PC-9 (cell line): ENCODE measurements at regions of chr19 and their contacts with region 1.

Region 1: GRCh38 chr19:12551060-12551832 is at the start of gene ZNF564:
- DNase-seq: peak; percentile 93 to 98
- H3K4me3 ChIP-seq: peak within 1 kb of the TSS; percentile 67
- H3K27ac ChIP-seq: peak within 1 kb of the TSS; percentile 59
- H3K4me1 ChIP-seq: peaks cover 21% of the 10 kb centered on the region
- H3K27me3 ChIP-seq: no peaks in the 10 kb centered on the region
- CTCF ChIP-seq: no peak
- total RNA-seq, gene ZNF564: 8.3 and 14.8 TPM in 2 replicates

Region 2: DNA sequence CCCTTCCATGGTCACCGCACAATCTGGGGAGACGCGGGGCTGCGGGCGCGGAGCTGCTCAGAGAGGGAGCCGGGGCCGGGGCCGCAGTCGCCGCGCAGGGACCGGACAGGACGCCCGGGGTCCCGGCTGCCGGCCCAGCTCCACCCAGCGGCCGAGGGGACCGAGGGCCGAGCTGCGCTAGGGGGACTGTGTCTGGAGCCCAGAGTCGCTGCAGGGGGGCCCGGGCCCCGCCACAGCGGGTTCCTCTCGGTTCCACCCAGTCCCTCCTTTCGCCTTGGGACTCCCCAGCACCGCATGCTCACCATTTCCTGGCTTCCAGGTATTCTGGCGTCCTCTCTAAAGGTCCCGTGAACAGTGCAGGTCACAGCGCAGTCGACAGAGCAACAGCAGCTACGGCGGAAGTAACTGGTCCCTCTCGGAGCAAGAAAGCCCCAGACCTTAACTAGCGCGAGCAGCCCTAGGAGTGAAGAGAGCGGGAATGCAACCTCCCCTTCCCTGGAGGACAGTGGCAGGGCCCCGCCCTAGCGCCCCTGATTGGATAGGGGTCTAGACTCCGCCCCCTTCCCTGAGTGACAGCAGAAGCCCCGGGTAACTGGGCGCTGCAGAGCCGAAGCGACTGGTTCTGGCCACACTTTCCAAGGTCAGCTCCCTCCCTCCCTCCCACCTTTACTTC is 498.6 kb before region 1 on chr19 and contains the start of gene ZNF878:
- CTCF ChIA-PET with region 1: no interaction called
- POLR2A ChIA-PET with region 1: no interaction called
- intact Hi-C with region 1: loop called (anchors 10 kb)
- DNase-seq: peak in 1 of 2 experiments; percentile 86
- H3K4me3 ChIP-seq: peak within 1 kb of the TSS; percentile 43
- H3K27ac ChIP-seq: no peak within 1 kb of the TSS
- H3K4me1 ChIP-seq: no peaks in the 10 kb centered on the region
- H3K27me3 ChIP-seq: no peaks in the 10 kb centered on the region
- CTCF ChIP-seq: no peak
- total RNA-seq, gene ZNF878: 0.33 and 0.46 TPM in 2 replicates

Region 3: GRCh38 chr19:12162882-12163806 is 388.1 kb before region 1 on chr19 and contains the start of gene ZNF136:
- CTCF ChIA-PET with region 1: no interaction called
- POLR2A ChIA-PET with region 1: no interaction called
- intact Hi-C with region 1: no loop called
- DNase-seq: peak; percentile 89 to 90
- H3K4me3 ChIP-seq: peak within 1 kb of the TSS; percentile 82
- H3K27ac ChIP-seq: peak within 1 kb of the TSS; percentile 89
- H3K4me1 ChIP-seq: peaks cover 12% of the 10 kb centered on the region
- H3K27me3 ChIP-seq: no peaks in the 10 kb centered on the region
- CTCF ChIP-seq: no peak
- total RNA-seq, gene ZNF136: 5.3 and 6.2 TPM in 2 replicates

Region 4: DNA sequence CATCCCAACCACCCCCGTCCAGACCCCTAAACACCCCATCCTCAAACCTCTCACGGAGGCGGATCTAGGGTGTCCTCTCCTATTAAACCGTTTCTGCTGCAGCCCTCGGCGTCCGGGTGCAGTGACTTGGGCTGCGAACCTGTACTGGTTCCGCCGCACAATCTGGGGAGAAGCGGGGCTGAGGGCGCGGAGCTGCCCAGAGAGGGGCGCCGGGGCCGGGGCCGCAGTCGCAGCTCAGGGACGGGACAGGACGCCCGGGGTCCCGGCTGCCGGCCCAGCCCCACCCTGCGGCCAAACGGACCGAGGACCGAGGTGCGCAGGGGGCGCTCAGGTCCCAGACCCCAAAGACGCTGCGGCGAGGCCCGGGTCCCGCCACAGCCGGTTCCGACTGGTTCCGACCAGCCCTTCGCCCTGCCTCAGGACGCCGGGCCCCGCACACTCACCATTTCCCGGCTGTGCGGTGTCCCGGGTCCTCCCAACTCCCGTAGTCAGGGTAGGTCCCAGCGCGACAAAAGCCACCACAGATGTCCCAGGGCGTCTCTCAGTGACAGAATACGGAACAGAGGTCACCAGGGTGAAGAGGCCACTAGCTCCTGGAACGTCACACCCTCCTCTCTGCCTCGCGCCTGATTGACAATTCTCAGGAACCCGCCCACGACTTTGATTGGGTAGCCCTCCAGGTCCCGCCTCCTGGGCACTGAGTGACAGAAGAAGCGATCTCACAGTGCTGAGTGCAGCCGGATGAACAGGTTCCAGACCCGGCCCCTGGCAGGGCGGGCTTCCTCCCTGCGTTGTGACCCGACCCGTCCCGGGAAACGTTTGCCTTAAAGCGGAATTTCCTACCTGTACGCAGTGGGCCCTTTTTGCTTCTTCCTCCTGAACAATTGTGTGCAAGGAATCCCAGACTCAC is 256.7 kb before region 1 on chr19 and contains the start of gene ZNF44:
- CTCF ChIA-PET with region 1: no interaction called
- POLR2A ChIA-PET with region 1: no interaction called
- intact Hi-C with region 1: loop called (anchors 2 kb)
- DNase-seq: peak; percentile 97 to 98
- H3K4me3 ChIP-seq: peak within 1 kb of the TSS; percentile 67
- H3K27ac ChIP-seq: no peak within 1 kb of the TSS
- H3K4me1 ChIP-seq: peaks cover under 1% of the 10 kb centered on the region; the same call in 1 of the 2 replicates
- H3K27me3 ChIP-seq: no peaks in the 10 kb centered on the region
- CTCF ChIP-seq: no peak
- total RNA-seq, gene ZNF44: 4.0 and 5.0 TPM in 2 replicates

Region 5: DNA sequence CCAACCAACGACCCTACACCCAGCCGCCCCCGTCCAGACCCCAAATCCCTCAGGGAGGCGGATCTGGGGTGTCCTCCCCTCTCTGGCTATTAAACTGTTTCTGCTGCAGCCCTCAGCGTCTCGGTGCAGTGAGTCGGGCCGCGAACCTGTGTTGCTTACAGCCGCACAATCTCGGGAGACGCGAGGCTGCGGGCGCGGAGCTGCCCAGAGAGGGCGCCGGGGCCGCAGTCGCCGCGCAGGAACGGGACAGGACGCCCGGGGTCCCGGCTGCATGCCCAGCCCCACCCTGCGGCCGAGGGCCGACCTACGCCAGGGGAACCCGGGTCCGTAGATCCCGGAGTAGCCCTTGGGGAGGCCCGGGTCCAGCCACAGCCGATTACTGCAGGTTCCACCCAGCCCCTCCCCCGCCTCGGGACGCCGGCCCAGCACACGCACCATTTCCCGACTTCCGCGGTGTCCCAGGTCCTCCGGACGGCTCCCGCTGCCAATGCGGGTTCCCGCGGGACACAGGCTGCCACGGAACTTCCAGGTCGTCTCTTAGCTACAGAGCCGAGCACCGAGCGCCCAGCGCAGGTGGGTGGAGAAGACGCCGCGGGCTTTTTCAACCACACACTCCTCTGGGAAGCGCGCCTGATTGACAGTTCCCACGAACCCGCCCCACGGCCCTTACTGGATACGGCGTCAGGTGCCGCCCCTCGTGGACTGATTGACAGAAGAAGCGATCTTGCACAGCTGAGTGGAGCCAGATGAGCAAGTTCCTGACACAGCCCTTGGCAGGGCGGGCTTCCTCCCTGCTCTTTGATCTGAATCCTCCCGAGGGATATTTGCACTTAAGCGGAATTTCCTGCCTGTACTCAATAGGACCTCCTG is 150.4 kb before region 1 on chr19 and contains the start of gene ZNF799:
- CTCF ChIA-PET with region 1: no interaction called
- POLR2A ChIA-PET with region 1: no interaction called
- intact Hi-C with region 1: loop called (anchors 5 kb)
- DNase-seq: peak; percentile 96 to 97
- H3K4me3 ChIP-seq: peak within 1 kb of the TSS; percentile 93
- H3K27ac ChIP-seq: peak within 1 kb of the TSS; percentile 7; the same call in 1 of the 2 replicates
- H3K4me1 ChIP-seq: peaks cover 11% of the 10 kb centered on the region; the same call in 1 of the 2 replicates
- H3K27me3 ChIP-seq: no peaks in the 10 kb centered on the region
- CTCF ChIP-seq: no peak; the same call in 1 of the 2 replicates
- total RNA-seq, gene ZNF799: 2.5 and 2.9 TPM in 2 replicates

Region 6: GRCh38 chr19:12440541-12441316 is 110.5 kb before region 1 on chr19 and contains the start of gene ZNF443:
- CTCF ChIA-PET with region 1: no interaction called
- POLR2A ChIA-PET with region 1: no interaction called
- intact Hi-C with region 1: loop called (anchors 2 kb)
- DNase-seq: peak; percentile 98 to 99
- H3K4me3 ChIP-seq: peak within 1 kb of the TSS; percentile 89
- H3K27ac ChIP-seq: no peak within 1 kb of the TSS
- H3K4me1 ChIP-seq: peaks cover 11% of the 10 kb centered on the region; the same call in 1 of the 2 replicates
- H3K27me3 ChIP-seq: no peaks in the 10 kb centered on the region
- CTCF ChIP-seq: no peak; the same call in 1 of the 2 replicates
- total RNA-seq, gene ZNF443: 3.3 and 3.5 TPM in 2 replicates

Region 7: GRCh38 chr19:12495002-12495802 is 56.0 kb before region 1 on chr19:
- CTCF ChIA-PET with region 1: no interaction called
- POLR2A ChIA-PET with region 1: no interaction called
- intact Hi-C with region 1: loop called (anchors 2 kb)
- DNase-seq: peak; percentile 84 to 93
- H3K4me3 ChIP-seq: peak overlapping the region; percentile 61
- H3K27ac ChIP-seq: no peak overlapping the region
- H3K4me1 ChIP-seq: 0 out of 2 replicates have a peak, but pooled peaks cover 6% of the 10 kb centered on the region
- H3K27me3 ChIP-seq: no peaks in the 10 kb centered on the region
- CTCF ChIP-seq: no peak; the same call in 1 of the 2 replicates

Region 8: DNA sequence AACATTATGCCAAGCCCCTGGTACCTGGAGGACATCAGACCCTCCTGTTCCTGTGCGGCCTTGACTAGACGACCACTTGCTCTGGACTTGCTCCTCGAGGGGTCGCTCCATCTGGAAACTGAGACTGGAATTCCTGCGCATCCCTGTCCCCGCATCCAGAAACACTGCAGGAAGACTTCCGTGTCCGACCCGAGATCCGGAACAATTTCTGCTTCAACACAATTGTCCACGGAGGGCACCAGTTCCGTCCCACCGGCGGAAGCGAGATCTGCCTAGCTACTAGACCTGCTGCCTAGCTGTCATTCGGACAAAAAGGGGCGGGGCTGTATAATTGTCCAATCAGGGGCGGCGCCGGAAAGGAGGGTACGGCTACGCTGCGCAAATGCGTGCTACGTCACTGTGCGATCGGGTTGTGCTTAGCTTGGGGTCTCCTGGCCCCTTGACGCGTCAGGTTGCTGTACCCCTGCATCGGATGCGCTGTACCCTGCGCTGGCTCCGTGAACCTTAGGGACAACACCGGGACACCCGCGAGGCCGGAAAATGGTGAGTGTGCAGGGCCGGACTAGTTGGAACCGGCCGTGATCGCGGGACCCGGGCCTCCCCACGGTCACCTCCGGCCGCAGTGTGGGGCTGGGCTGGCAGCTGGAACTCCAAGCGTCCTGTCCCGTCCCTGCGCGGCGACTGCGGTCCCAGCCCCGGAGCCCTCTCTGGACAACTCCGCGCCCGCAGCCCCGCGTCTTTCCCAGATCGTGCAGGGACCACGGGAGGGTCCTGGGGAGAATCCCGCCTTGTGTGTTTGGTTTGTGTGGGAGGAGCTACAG is 59.5 kb after region 1 on chr19 and contains the starts of genes ZNF490 and ZNF791:
- CTCF ChIA-PET with region 1: interaction called, 3 read pairs
- POLR2A ChIA-PET with region 1: interaction called, 4 read pairs
- intact Hi-C with region 1: loop called (anchors 2 kb)
- DNase-seq: peak; percentile 94 to 95
- H3K4me3 ChIP-seq: peak within 1 kb of the TSS; percentile 78
- H3K27ac ChIP-seq: peak within 1 kb of the TSS; percentile 55
- H3K4me1 ChIP-seq: peaks cover 8% of the 10 kb centered on the region; the same call in 1 of the 2 replicates
- H3K27me3 ChIP-seq: no peaks in the 10 kb centered on the region
- CTCF ChIP-seq: no peak
- total RNA-seq, gene ZNF490: 7.5 and 8.9 TPM in 2 replicates
- total RNA-seq, gene ZNF791: 22.4 and 27.7 TPM in 2 replicates

Region 9: GRCh38 chr19:12639901-12640613 is 88.8 kb after region 1 on chr19:
- CTCF ChIA-PET with region 1: no interaction called
- POLR2A ChIA-PET with region 1: no interaction called
- intact Hi-C with region 1: no loop called
- DNase-seq: peak; percentile 58 to 68
- H3K4me3 ChIP-seq: no peak overlapping the region
- H3K27ac ChIP-seq: no peak overlapping the region
- H3K4me1 ChIP-seq: no peaks in the 10 kb centered on the region
- H3K27me3 ChIP-seq: no peaks in the 10 kb centered on the region
- CTCF ChIP-seq: peak; percentile 73

Region 10: GRCh38 chr19:12736995-12737834 is 186.0 kb after region 1 on chr19 and contains the start of gene GET3:
- CTCF ChIA-PET with region 1: no interaction called
- POLR2A ChIA-PET with region 1: no interaction called
- intact Hi-C with region 1: no loop called
- DNase-seq: peak; percentile 94 to 100
- H3K4me3 ChIP-seq: peak within 1 kb of the TSS; percentile 64
- H3K27ac ChIP-seq: peak within 1 kb of the TSS; percentile 75
- H3K4me1 ChIP-seq: peaks cover 30% of the 10 kb centered on the region
- H3K27me3 ChIP-seq: no peaks in the 10 kb centered on the region
- CTCF ChIP-seq: no peak
- total RNA-seq, gene GET3: 72.8 and 81.9 TPM in 2 replicates